ENCODE measurements at regions of chr13 and their contacts with region 1.

Region 1: DNA sequence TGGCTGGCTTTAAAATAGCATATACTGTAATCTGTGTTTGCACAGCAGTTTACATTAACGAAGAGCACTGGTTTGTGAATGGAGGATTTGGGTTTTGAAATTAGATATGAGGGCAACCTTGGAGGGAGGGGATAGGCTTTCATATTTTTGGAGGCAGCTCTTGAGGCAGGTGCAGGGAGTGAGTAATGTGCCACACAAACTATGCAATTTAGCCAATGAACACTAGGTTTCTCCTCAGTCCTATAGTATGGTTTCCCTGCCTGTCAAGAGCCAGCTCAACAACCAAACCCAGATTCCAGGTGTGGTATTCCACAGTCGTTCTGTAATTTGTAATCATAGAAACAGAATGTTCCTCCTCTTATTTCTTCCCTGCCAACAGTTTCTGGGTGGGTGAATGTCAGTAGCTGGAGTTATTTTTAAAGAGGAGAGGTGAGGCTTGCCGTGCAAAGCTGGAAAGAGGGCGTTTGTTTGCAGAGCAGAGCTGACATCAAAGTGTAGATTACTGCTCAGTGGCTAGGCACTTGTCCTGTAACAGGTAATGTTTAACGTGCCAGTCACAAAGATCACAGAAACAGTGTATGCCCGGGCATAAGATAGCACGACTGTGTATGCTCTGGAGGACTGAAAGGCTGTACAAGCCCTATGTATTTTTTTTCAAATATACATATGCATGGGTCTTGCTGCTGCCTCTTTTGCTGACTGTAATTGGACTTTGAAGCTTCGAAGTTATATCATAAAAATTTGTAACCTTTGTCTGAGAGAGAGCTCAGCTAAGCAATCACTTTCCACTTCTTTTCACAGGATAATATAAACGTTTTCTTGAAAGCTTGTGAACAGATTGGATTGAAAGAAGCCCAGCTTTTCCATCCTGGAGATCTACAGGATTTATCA is 124.2 kb downstream of the LMO7 start:
- DNase-seq: peak; percentile 16
- ATAC-seq: peak; percentile 74
- H3K4me3 Mint-ChIP-seq: peak overlapping the region; percentile 60
- H3K27ac Mint-ChIP-seq: peak overlapping the region; percentile 77
- H3K4me1 Mint-ChIP-seq: peaks cover 71% of the 10 kb centered on the region
- H3K27me3 Mint-ChIP-seq: no peaks in the 10 kb centered on the region

Region 2: GRCh38 chr13:75365724-75366173 is 394.6 kb before region 1 on chr13:
- CTCF ChIA-PET with region 1: no interaction called
- POLR2A ChIA-PET with region 1: no interaction called
- intact Hi-C with region 1: loop called in 1 of 2 experiments (anchors 1 kb)
- DNase-seq: peak; percentile 41
- ATAC-seq: peak; percentile 93
- H3K4me3 Mint-ChIP-seq: peak overlapping the region; percentile 24
- H3K27ac Mint-ChIP-seq: peak overlapping the region; percentile 79
- H3K4me1 Mint-ChIP-seq: peaks cover 44% of the 10 kb centered on the region
- H3K27me3 Mint-ChIP-seq: no peaks in the 10 kb centered on the region

Region 3: GRCh38 chr13:75549262-75550158 is 210.9 kb before region 1 on chr13 and contains the start of gene UCHL3:
- CTCF ChIA-PET with region 1: no interaction called
- POLR2A ChIA-PET with region 1: no interaction called
- intact Hi-C with region 1: loop called in 1 of 2 experiments (anchors 10 kb)
- DNase-seq: peak; percentile 99
- ATAC-seq: peak; percentile 96
- H3K4me3 Mint-ChIP-seq: peak within 1 kb of the TSS; percentile 85
- H3K27ac Mint-ChIP-seq: peak within 1 kb of the TSS; percentile 95
- H3K4me1 Mint-ChIP-seq: peaks cover 41% of the 10 kb centered on the region
- H3K27me3 Mint-ChIP-seq: no peaks in the 10 kb centered on the region
- total RNA-seq, gene UCHL3: 42.2 to 45.3 TPM

Region 4: GRCh38 chr13:75694722-75695121 is 65.7 kb before region 1 on chr13:
- CTCF ChIA-PET with region 1: interaction called, 20 read pairs
- POLR2A ChIA-PET with region 1: interaction called, 5 read pairs
- intact Hi-C with region 1: no loop called
- DNase-seq: no peak
- ATAC-seq: no peak
- H3K4me3 Mint-ChIP-seq: no peak overlapping the region
- H3K27ac Mint-ChIP-seq: no peak overlapping the region
- H3K4me1 Mint-ChIP-seq: no peaks in the 10 kb centered on the region
- H3K27me3 Mint-ChIP-seq: no peaks in the 10 kb centered on the region

Region 5: GRCh38 chr13:75771818-75772217 is 11.4 kb after region 1 on chr13:
- CTCF ChIA-PET with region 1: interaction called, 12 read pairs
- POLR2A ChIA-PET with region 1: interaction called, 3 read pairs
- intact Hi-C with region 1: loop called in 1 of 2 experiments (anchors 1 kb)
- DNase-seq: no peak
- ATAC-seq: peak; percentile 97
- H3K4me3 Mint-ChIP-seq: no peak overlapping the region
- H3K27ac Mint-ChIP-seq: peak overlapping the region; percentile 39
- H3K4me1 Mint-ChIP-seq: peaks cover 46% of the 10 kb centered on the region
- H3K27me3 Mint-ChIP-seq: no peaks in the 10 kb centered on the region

Region 6: GRCh38 chr13:75870397-75870903 is 110.1 kb after region 1 on chr13:
- CTCF ChIA-PET with region 1: interaction called, 8 read pairs
- POLR2A ChIA-PET with region 1: no interaction called
- intact Hi-C with region 1: loop called in 1 of 2 experiments (anchors 5 kb)
- DNase-seq: peak; percentile 10
- ATAC-seq: peak; percentile 27
- H3K4me3 Mint-ChIP-seq: no peak overlapping the region
- H3K27ac Mint-ChIP-seq: peak overlapping the region; percentile 58
- H3K4me1 Mint-ChIP-seq: peaks cover 19% of the 10 kb centered on the region
- H3K27me3 Mint-ChIP-seq: peaks cover 8% of the 10 kb centered on the region

Region 7: GRCh38 chr13:76991796-76992547 is 1231.6 kb after region 1 on chr13 and contains the start of gene CLN5:
- CTCF ChIA-PET with region 1: no interaction called
- POLR2A ChIA-PET with region 1: no interaction called
- intact Hi-C with region 1: loop called in 1 of 2 experiments (anchors 5 kb)
- DNase-seq: peak; percentile 97
- ATAC-seq: peak; percentile 93
- H3K4me3 Mint-ChIP-seq: peak within 1 kb of the TSS; percentile 97
- H3K27ac Mint-ChIP-seq: peak within 1 kb of the TSS; percentile 99
- H3K4me1 Mint-ChIP-seq: peaks cover 36% of the 10 kb centered on the region
- H3K27me3 Mint-ChIP-seq: peaks cover 3% of the 10 kb centered on the region
- total RNA-seq, gene CLN5: 14.5 to 14.9 TPM

Measured in activated CD4-positive, alpha-beta T cell treated with anti-CD3 and anti-CD28 coated beads for 36 hours (primary cell).